ENCODE measurements at regions of chr17 and their contacts with region 1.

Region 1: DNA sequence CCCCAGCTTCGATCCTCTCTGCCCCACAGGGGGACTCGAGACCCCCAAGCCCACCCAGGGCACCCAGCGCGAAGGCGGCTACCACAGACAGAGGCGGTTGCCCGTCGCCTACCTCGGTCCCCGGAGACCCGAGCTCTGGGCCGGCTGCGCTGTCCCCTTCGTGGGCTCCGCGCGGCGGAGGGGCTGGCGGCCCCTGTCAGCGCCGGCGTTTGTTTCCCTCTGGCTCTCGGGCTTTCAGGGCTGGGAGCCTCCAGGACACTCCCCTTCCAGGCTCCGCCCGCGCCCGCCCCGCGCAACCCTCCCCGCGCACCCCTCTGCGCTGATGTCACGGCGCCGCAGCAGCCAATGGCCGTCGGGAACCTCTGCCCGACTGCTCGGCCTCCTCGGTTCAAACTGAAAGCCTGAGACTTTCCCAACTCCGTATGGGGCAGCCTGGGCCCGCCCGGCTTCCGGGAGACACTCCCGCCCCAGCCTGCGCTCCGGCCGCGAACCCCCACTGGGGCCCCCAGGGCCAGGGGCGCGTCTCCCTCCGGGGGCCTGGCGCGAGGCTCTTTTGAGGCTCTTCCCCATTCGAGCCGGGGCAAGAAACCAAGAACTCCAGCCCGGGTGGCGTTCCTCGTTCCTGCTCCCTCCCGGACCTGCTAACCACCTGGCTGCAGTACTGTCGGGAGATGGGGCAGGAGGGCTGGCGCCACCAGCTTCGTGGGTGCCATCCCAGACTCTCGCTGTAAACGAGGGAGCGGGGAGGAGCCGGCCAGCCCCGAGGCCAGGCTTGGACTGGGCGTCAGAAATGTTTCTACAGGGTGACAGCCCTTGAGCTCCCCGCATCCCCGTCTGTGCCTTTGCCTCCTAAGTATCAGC is at the start of gene CDC42EP4:
- DNase-seq: peak; percentile 87 to 89 (median 88)
- H3K4me3 ChIP-seq: peak within 1 kb of the TSS; percentile 64 to 99 (median 99)
- H3K4me3 Mint-ChIP-seq: peak within 1 kb of the TSS; percentile 95 to 96
- H3K27ac ChIP-seq: peak within 1 kb of the TSS; percentile 56 to 85
- H3K27ac Mint-ChIP-seq: peak within 1 kb of the TSS; percentile 87 to 94 (median 91)
- H3K4me1 ChIP-seq: peaks cover 25 to 38% of the 10 kb centered on the region in 2 donors
- H3K4me1 Mint-ChIP-seq: peaks cover 34% of the 10 kb centered on the region
- H3K27me3 ChIP-seq: no peaks in the 10 kb centered on the region
- H3K27me3 Mint-ChIP-seq: peaks cover 0 to 3% (median 0%) of the 10 kb centered on the region in 3 donors
- CTCF ChIP-seq: no peak
- polyA plus RNA-seq, gene CDC42EP4: 6.4 to 12.7 (median 6.6) TPM

Region 2: GRCh38 chr17:73340093-73340596 is 28.1 kb after region 1 on chr17:
- intact Hi-C with region 1: loop called in 1 of 2 experiments (anchors 2 kb)
- DNase-seq: peak; percentile 90 to 98 (median 96)
- H3K4me3 ChIP-seq: peak overlapping the region in 1 of 3 experiments; percentile 6
- H3K4me3 Mint-ChIP-seq: peak overlapping the region; percentile 51 to 63
- H3K27ac ChIP-seq: peak overlapping the region in 1 of 2 donors; percentile 73
- H3K27ac Mint-ChIP-seq: peak overlapping the region; percentile 89 to 95 (median 94)
- H3K4me1 ChIP-seq: peaks cover 10 to 13% of the 10 kb centered on the region in 2 donors
- H3K4me1 Mint-ChIP-seq: peaks cover 16% of the 10 kb centered on the region
- H3K27me3 ChIP-seq: no peaks in the 10 kb centered on the region
- H3K27me3 Mint-ChIP-seq: peaks cover 0 to 4% (median 3%) of the 10 kb centered on the region in 3 donors
- CTCF ChIP-seq: peak; percentile 57

Region 3: DNA sequence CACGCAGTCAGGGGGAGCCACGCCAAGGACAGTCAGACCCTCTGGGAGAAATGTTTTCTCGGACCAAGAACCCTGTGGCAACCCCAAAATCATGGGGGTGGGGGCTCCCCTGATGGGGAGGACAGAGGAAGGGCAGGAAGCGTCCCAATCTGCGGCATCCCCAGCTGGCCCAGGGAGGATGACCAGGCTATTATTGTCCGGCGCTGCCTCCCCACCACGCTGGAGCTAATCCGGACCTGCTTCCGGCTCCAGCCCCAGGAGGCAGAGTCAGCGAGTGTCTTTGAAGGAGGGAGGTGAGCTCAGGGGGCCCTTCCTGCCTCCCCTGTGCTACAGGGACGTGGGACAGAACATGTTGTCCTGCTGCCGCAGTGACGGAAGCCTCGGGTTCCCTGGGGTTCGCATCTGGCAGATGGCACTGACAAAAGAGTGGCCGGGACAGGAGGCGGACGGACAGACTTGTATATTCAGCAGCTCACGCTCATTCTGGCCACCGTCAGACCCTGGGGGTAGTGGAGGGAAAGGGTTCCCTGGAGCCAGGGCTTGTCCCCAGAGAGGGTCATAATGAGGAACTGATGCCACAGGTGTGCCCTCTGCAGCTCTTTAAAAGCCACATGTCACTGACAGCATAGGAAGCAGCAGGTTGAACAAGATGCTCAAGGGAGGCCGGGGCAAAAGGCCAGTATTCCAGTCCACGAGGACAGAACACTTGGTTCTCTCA is 54.1 kb after region 1 on chr17:
- intact Hi-C with region 1: loop called in 1 of 2 experiments (anchors 5 kb)
- DNase-seq: no peak
- H3K4me3 ChIP-seq: no peak overlapping the region
- H3K4me3 Mint-ChIP-seq: no peak overlapping the region
- H3K27ac ChIP-seq: no peak overlapping the region
- H3K27ac Mint-ChIP-seq: no peak overlapping the region
- H3K4me1 ChIP-seq: peaks cover 0 to under 1% of the 10 kb centered on the region in 2 donors
- H3K4me1 Mint-ChIP-seq: peaks cover 8% of the 10 kb centered on the region
- H3K27me3 ChIP-seq: no peaks in the 10 kb centered on the region
- H3K27me3 Mint-ChIP-seq: peaks cover under 1 to 9% (median 1%) of the 10 kb centered on the region in 3 donors
- CTCF ChIP-seq: no peak

Measured in CD14-positive monocyte (primary cell).